Upper lobe of right lung (tissue), 1 donor: ENCODE measurements at regions of chr12 and their contacts with region 1.

Region 1: DNA sequence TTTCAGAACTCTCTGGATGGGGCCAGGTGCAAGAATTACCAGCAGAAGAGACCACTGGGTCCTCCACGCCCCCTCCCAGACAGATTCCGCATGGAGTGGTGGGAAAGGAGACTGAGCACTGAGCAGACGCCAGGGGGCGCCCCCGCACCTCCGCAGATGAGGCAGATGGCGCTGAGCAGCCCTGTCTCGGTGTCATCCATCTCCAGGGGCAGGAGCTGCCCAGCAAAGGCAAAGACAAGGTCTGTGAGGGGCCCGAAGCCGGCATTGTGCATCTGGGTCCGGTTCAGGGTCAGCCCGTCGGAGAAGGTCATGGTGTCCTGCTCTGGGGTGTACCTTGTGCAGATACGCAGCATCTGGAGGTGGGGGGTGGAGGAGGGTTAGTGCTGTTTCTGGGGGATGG is 6.3 kb upstream of the ITGB7 start:
- DNase-seq: peak; percentile 92
- ATAC-seq: peak; percentile 82
- H3K4me3 ChIP-seq: no peak overlapping the region
- H3K27ac ChIP-seq: no peak overlapping the region
- H3K4me1 ChIP-seq: peaks cover 60% of the 10 kb centered on the region
- H3K27me3 ChIP-seq: no peaks in the 10 kb centered on the region
- CTCF ChIP-seq: peak; percentile 89

Region 2: DNA sequence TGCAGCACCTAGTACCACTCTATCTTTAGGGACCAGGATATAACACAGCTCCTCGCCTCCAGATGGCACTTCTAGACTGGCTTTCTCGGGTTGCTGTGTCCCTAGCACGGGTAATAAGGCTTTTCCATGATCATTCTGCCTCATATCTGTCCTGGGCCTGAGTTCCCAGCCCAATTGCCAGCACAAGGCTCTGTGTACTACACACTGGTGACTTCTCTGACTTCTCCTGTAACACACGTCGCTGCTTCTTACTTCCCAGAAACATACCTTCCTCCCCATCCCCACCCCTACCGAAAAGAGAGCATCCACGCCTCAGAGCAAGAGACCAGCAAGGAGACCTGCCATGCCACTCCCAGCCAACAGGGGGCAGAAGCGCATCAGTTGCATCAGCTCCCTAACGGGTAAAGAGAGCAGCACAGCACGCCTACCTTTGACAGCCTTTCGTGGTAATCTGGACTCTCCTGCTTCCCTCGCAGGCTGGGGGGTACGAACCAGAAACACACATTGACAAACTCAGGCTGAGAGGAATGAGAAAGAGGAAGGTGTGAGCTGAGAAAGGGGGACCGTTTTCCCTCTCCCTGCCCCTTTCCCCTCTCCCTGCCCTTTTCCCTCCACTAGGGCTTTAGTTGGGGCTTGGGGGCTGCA is 54.0 kb before region 1 on chr12:
- intact Hi-C with region 1: no loop called
- DNase-seq: peak; percentile 90
- ATAC-seq: peak; percentile 98
- H3K4me3 ChIP-seq: no peak overlapping the region
- H3K27ac ChIP-seq: no peak overlapping the region
- H3K4me1 ChIP-seq: peaks cover 3% of the 10 kb centered on the region
- H3K27me3 ChIP-seq: no peaks in the 10 kb centered on the region
- CTCF ChIP-seq: peak; percentile 97

Region 3: DNA sequence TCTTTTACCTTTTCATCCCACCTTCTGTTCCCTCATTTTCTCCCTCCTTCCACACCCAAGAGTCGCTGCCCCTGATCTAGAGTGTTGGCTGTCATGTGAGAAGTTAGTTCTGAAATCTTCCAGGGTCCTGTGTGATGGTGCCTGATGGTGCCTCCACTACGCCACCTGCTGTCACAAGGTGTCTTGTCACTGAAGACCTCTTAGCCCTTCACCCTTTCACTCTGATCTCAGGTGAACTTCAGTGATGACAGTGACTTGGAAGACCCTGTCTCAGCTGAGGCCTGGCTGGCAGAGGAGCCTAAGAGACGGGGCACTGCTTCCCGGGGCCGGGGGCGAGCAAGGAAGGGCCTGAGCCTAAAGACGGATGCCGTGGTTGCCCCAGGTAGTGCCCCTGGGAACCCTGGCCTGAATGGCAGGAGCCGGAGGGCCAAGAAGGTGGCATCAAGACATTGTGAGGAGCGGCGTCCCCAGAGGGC is 74.4 kb after region 1 on chr12:
- intact Hi-C with region 1: loop called (anchors 10 kb)
- DNase-seq: peak; percentile 79
- ATAC-seq: peak; percentile 87
- H3K4me3 ChIP-seq: no peak overlapping the region
- H3K27ac ChIP-seq: no peak overlapping the region
- H3K4me1 ChIP-seq: no peaks in the 10 kb centered on the region
- H3K27me3 ChIP-seq: no peaks in the 10 kb centered on the region
- CTCF ChIP-seq: peak; percentile 63